ENCODE measurements at regions of chr1 and their contacts with region 1.

Region 1: GRCh38 chr1:48661726-48662463 is 114.8 kb downstream of the BEND5 start:
- DNase-seq: peak; percentile 72 to 76
- ATAC-seq: peak; percentile 95 to 100
- H3K4me3 ChIP-seq: no peak overlapping the region
- H3K27ac ChIP-seq: peak overlapping the region; percentile 45 to 80 (median 74)
- H3K4me1 ChIP-seq: peaks cover 14% of the 10 kb centered on the region in 2 donors
- H3K27me3 ChIP-seq: no peaks in the 10 kb centered on the region
- CTCF ChIP-seq: no peak
- POLR2A ChIP-seq: no peak

Region 2: DNA sequence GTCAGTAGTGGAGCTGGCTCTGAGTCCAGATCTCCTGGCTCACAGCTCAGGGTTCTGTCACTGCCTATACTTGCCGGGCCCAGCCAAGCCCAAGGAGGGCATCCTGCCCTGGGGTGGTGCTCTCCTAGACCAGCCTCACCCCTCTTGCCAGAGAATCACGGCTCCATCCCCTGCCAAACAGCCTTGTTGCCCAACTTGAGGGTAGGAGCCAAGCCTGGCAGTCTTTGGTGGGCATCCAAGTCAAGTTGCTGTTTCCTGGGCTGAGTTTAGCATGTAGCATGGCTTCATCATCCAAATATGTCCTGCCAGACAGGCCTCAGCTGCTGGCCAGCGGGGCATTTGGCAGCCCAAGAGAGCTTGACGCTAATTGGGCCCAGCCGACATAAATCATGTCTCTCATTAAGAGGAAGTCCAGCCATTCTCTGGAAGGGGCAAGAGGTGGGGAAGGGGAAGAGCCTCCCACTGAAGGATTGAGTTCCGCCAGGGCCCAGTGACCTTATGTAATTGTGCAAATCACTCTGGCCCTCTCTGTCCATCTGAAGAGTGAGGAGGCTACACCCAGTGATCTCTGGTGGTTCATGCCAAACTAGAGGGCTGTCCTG is 642.1 kb before region 1 on chr1:
- in situ Hi-C with region 1: no loop called
- intact Hi-C with region 1: loop called (anchors 10 kb)
- DNase-seq: peak; percentile 83 to 94
- ATAC-seq: peak; percentile 95 to 97
- H3K4me3 ChIP-seq: no peak overlapping the region
- H3K27ac ChIP-seq: peak overlapping the region; percentile 64 to 77 (median 76)
- H3K4me1 ChIP-seq: peaks cover 0 to 14% of the 10 kb centered on the region in 2 donors
- H3K27me3 ChIP-seq: no peaks in the 10 kb centered on the region
- CTCF ChIP-seq: no peak
- POLR2A ChIP-seq: no peak

Region 3: GRCh38 chr1:48572646-48573261 is 89.1 kb before region 1 on chr1:
- in situ Hi-C with region 1: no loop called
- intact Hi-C with region 1: loop called (anchors 5 kb)
- DNase-seq: peak in 1 of 2 donors; percentile 16
- ATAC-seq: peak; percentile 36 to 42
- H3K4me3 ChIP-seq: no peak overlapping the region
- H3K27ac ChIP-seq: no peak overlapping the region
- H3K4me1 ChIP-seq: no peaks in the 10 kb centered on the region
- H3K27me3 ChIP-seq: no peaks in the 10 kb centered on the region
- CTCF ChIP-seq: peak; percentile 21 to 70 (median 41)
- POLR2A ChIP-seq: no peak

Measured in gastrocnemius medialis (tissue), 4 donors.